Activated CD4-positive, alpha-beta memory T cell treated with anti-CD3 and anti-CD28 coated beads for 36 hours (primary cell): ENCODE measurements at regions of chr12 and their contacts with region 1.

Region 1: GRCh38 chr12:12032851-12033588 is 37.7 kb upstream of the BCL2L14 start:
- DNase-seq: peak; percentile 81
- H3K4me3 Mint-ChIP-seq: peak overlapping the region; percentile 72
- H3K27ac Mint-ChIP-seq: peak overlapping the region; percentile 88
- H3K4me1 Mint-ChIP-seq: peaks cover 69% of the 10 kb centered on the region
- H3K27me3 Mint-ChIP-seq: peaks cover 1% of the 10 kb centered on the region

Region 2: GRCh38 chr12:11545484-11546330 is 487.3 kb before region 1 on chr12:
- CTCF ChIA-PET with region 1: interaction called, 4 read pairs
- POLR2A ChIA-PET with region 1: no interaction called
- intact Hi-C with region 1: loop called (anchors 2 kb)
- DNase-seq: peak; percentile 59
- H3K4me3 Mint-ChIP-seq: peak overlapping the region; percentile 14
- H3K27ac Mint-ChIP-seq: peak overlapping the region; percentile 72
- H3K4me1 Mint-ChIP-seq: peaks cover 42% of the 10 kb centered on the region
- H3K27me3 Mint-ChIP-seq: no peaks in the 10 kb centered on the region

Region 3: GRCh38 chr12:11648831-11649702 is 384.0 kb before region 1 on chr12 and contains the start of gene ETV6:
- CTCF ChIA-PET with region 1: interaction called, 12 read pairs
- POLR2A ChIA-PET with region 1: interaction called, 6 read pairs
- intact Hi-C with region 1: loop called (anchors 2 kb)
- DNase-seq: peak; percentile 85
- H3K4me3 Mint-ChIP-seq: peak within 1 kb of the TSS; percentile 87
- H3K27ac Mint-ChIP-seq: peak within 1 kb of the TSS; percentile 98
- H3K4me1 Mint-ChIP-seq: peaks cover 28% of the 10 kb centered on the region
- H3K27me3 Mint-ChIP-seq: no peaks in the 10 kb centered on the region
- total RNA-seq, gene ETV6: 55.3 to 57.5 TPM

Region 4: GRCh38 chr12:11771356-11771755 is 261.7 kb before region 1 on chr12:
- CTCF ChIA-PET with region 1: interaction called, 12 read pairs
- POLR2A ChIA-PET with region 1: interaction called, 5 read pairs
- intact Hi-C with region 1: loop called (anchors 2 kb)
- DNase-seq: peak; percentile 49
- H3K4me3 Mint-ChIP-seq: no peak overlapping the region
- H3K27ac Mint-ChIP-seq: peak overlapping the region; percentile 88
- H3K4me1 Mint-ChIP-seq: peaks cover 93% of the 10 kb centered on the region
- H3K27me3 Mint-ChIP-seq: no peaks in the 10 kb centered on the region

Region 5: DNA sequence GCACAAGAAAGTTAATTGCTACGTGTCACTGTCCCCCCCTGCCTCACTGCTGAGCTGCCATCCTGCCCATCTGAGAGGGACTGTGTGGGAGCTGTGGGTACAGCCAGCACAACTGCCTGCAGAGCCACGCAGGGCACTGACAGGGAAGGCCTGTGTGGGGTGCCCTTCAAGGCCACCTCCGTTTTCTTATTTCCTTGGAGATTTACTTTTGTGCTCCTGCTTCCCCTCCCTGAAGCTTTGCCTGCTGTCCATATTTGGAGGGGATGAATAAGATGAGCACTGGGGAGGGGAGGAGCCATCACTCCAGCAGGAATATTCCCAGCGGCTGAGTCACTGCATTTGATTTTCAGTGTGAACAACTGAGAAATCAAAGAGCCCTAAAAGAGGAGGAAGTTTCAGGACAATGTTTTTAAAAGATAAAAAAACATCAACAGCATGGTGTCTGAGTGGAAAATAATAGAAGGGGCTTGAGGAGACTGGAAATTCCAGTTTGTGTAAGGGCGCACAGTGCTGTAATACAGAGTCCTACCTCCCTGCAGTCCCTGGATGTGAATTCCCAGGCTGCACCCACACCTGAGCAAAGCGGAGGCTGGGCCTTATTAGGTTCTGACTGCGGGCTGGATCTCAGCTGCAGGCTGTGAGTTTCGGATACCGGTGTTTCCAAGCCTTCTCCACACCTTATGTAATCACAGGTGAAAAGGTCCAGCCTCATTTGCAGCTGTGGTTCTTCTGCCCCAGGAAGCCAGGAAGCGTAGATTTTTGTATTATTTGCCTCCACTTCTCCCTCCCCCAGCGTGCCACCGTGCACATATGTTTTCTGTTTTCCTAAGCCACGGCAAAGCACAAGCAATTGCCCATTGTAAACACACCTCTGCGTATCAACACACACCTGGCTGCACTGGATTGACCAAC is 154.9 kb before region 1 on chr12:
- CTCF ChIA-PET with region 1: interaction called, 8 read pairs
- POLR2A ChIA-PET with region 1: no interaction called
- intact Hi-C with region 1: loop called (anchors 2 kb)
- DNase-seq: peak; percentile 37
- H3K4me3 Mint-ChIP-seq: no peak overlapping the region
- H3K27ac Mint-ChIP-seq: peak overlapping the region; percentile 55
- H3K4me1 Mint-ChIP-seq: peaks cover 51% of the 10 kb centered on the region
- H3K27me3 Mint-ChIP-seq: no peaks in the 10 kb centered on the region

Region 6: DNA sequence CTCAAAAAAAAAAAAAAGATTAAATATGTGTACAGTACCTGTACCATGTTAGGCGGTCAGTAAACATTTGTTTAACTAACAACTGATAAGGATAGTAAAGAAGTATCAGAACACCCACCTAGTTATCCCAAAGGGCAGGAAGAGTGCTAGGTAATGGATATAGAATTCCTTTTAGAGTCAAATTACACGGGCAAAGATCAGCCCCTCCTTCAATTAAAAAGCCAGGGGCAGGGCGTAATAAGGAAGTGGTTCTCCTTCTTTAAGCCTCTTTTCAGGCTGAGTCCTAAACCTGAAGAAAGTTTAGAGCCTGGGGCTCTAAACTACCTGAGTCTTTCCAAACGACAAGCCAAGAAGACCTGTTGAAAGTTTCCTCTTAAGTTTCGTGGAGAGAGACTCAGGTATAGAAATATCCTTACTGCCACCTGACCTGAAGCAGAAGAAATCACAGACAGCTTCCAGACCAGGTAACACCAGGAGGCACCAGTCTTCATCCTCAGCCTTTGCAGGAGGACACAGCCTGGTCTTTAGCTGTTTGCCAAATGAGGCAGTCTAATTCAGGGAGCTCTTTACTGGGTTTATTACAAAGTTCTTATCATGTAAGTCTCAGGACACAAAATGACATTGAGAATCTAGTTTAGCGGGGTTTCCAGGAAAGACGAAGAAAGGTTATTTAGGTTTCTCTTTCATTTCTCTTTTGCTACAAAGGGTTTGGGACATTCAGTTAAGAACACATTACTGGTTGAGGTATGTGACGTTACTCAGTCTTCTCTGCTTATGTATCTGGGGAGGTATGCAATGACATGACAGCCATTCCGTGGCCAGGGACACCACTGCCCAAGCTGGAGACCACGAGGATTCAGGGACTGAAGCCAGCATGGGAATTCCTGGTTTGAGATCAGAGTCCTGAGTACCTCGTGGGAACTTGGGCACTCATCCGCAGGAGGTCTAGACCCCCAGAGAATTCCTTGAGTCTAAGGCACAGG is 37.9 kb after region 1 on chr12 and contains the start of gene BCL2L14:
- CTCF ChIA-PET with region 1: interaction called, 11 read pairs
- POLR2A ChIA-PET with region 1: interaction called, 3 read pairs
- intact Hi-C with region 1: loop called (anchors 2 kb)
- DNase-seq: peak; percentile 50
- H3K4me3 Mint-ChIP-seq: peak within 1 kb of the TSS; percentile 83
- H3K27ac Mint-ChIP-seq: peak within 1 kb of the TSS; percentile 92
- H3K4me1 Mint-ChIP-seq: peaks cover 35% of the 10 kb centered on the region
- H3K27me3 Mint-ChIP-seq: no peaks in the 10 kb centered on the region
- total RNA-seq, gene BCL2L14: 11.5 to 12.7 TPM